Activated CD8-positive, alpha-beta T cell treated with anti-CD3 and anti-CD28 coated beads for 36 hours (primary cell): ENCODE measurements at regions of chr14 and their contacts with region 1.

Region 1: DNA sequence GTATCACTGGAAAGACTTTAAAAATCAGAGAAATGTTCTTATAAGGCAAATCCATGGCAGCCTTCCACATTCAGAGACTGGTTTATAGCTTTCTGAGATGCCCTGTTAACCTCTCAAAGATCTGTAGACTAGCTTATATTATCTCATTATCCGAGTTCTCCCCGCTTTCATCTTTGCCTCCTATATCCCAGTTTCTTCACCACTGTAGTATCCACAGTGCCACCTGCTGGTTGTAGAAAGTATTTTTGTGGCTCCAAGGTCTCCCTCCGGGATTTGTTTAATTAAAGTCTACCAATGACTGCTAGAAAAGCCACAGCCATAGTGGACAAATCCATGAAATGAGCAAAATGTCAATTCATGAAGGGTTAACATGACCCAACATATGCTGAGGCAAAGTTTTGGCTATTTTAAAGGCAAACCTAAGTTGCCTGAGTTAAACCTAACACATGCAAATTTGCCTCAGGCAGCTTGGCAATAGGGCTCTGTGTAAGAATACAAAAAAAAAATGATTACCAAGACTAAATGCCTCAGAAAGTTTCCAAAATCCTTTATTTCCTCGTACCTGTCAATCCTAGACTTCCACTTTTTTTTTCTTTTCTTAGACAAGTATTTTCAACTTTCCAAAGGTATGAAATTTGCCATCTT is 218.8 kb upstream of the BMP4 start:
- DNase-seq: peak; percentile 66
- ATAC-seq: no peak
- H3K4me3 Mint-ChIP-seq: no peak overlapping the region
- H3K27ac Mint-ChIP-seq: no peak overlapping the region
- H3K4me1 Mint-ChIP-seq: no peaks in the 10 kb centered on the region
- H3K27me3 Mint-ChIP-seq: peaks cover 22% of the 10 kb centered on the region
- CTCF ChIP-seq: peak; percentile 75

Region 2: GRCh38 chr14:53539489-53540126 is 635.8 kb before region 1 on chr14:
- CTCF ChIA-PET with region 1: interaction called, 29 read pairs
- POLR2A ChIA-PET with region 1: no interaction called
- intact Hi-C with region 1: loop called (anchors 10 kb)
- DNase-seq: peak; percentile 69
- ATAC-seq: no peak
- H3K4me3 Mint-ChIP-seq: no peak overlapping the region
- H3K27ac Mint-ChIP-seq: no peak overlapping the region
- H3K4me1 Mint-ChIP-seq: no peaks in the 10 kb centered on the region
- H3K27me3 Mint-ChIP-seq: no peaks in the 10 kb centered on the region
- CTCF ChIP-seq: peak; percentile 67

Region 3: GRCh38 chr14:53929871-53930715 is 245.3 kb before region 1 on chr14:
- CTCF ChIA-PET with region 1: interaction called, 3 read pairs
- POLR2A ChIA-PET with region 1: no interaction called
- intact Hi-C with region 1: loop called (anchors 5 kb)
- DNase-seq: peak; percentile 62
- ATAC-seq: no peak
- H3K4me3 Mint-ChIP-seq: no peak overlapping the region
- H3K27ac Mint-ChIP-seq: no peak overlapping the region
- H3K4me1 Mint-ChIP-seq: no peaks in the 10 kb centered on the region
- H3K27me3 Mint-ChIP-seq: peaks cover 2% of the 10 kb centered on the region
- CTCF ChIP-seq: peak; percentile 47

Region 4: DNA sequence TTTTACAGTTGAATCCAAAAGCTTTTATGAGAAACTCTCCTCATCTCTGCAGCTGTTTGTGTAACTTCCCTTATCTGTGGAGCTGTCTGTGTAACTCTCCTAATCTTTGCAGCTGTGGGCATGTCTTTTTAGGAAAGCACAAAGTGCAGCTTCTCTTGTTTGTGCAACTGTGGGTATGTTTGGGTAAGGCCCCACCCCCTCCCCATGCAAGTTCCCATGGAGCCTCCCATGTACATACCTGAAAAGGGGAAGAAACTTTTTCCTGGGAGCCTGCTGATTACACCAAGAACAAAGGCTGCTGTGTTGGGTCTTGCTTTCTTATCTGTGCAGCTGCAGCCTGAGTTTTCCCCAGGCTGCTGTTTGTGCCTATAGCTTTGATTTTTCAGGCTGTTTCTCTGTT is 178.7 kb after region 1 on chr14:
- CTCF ChIA-PET with region 1: no interaction called
- POLR2A ChIA-PET with region 1: no interaction called
- intact Hi-C with region 1: no loop called
- DNase-seq: no peak
- ATAC-seq: no peak
- H3K4me3 Mint-ChIP-seq: no peak overlapping the region
- H3K27ac Mint-ChIP-seq: no peak overlapping the region
- H3K4me1 Mint-ChIP-seq: no peaks in the 10 kb centered on the region
- H3K27me3 Mint-ChIP-seq: peaks cover 22% of the 10 kb centered on the region
- CTCF ChIP-seq: no peak